ENCODE measurements at regions of chr12 and their contacts with region 1.

Region 1: GRCh38 chr12:54294152-54294952 is 6.5 kb downstream of the NFE2 start:
- DNase-seq: peak; percentile 76
- ATAC-seq: peak; percentile 58
- H3K4me3 Mint-ChIP-seq: no peak overlapping the region
- H3K27ac Mint-ChIP-seq: no peak overlapping the region
- H3K4me1 Mint-ChIP-seq: peaks cover 5% of the 10 kb centered on the region
- H3K27me3 Mint-ChIP-seq: peaks cover 18% of the 10 kb centered on the region

Region 2: DNA sequence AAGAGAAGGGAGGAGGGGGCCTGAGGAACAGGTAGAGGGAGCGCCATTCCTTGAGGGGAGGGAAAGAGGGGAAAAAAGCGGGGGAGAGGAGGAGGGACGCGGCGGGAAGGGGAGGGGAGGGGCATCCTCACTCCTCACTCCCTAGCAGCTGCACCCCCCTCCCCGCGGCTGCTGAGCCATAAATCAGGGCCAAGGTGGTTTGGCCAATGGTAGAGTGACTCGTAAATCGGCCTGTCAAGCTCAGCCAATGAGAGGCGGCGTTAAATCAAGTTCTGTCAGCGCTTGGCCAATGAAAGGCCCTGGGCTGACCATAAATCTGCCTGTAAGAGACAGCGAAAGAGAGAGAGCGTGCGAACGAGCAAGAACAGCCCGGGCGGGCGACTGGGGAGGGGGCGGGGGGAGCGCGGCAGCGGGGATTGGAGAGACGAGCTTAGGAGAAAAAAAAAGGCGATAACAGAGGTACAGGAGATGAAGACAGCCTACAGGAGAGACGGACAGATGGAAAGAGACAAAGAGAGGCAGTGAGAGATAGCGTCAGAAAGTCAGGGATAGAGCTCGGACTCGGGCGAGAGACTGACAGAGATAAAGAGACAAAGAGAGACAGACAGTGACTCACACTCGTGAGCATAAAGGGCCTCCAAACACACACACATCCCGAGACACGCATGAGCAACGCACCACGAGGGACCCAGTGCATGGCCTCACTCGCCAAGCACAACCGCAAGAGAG is 64.8 kb after region 1 on chr12:
- CTCF ChIA-PET with region 1: interaction called, 47 read pairs
- POLR2A ChIA-PET with region 1: interaction called, 4 read pairs
- DNase-seq: peak; percentile 98
- ATAC-seq: peak; percentile 96
- H3K4me3 Mint-ChIP-seq: no peak overlapping the region
- H3K27ac Mint-ChIP-seq: no peak overlapping the region
- H3K4me1 Mint-ChIP-seq: peaks cover 30% of the 10 kb centered on the region
- H3K27me3 Mint-ChIP-seq: no peaks in the 10 kb centered on the region

Measured in activated CD8-positive, alpha-beta T cell treated with anti-CD3 and anti-CD28 coated beads, Interleukin-2, amount 10 ng/mL, durations not matched to agents 7 days and 5 days (primary cell).